HepG2 (cell line): ENCODE measurements at regions of chr2 and their contacts with region 1.

Region 1: GRCh38 chr2:159712143-159712928 is at the start of gene MARCHF7:
- DNase-seq: peak; percentile 95
- ATAC-seq: peak; percentile 97
- H3K4me3 ChIP-seq: peak within 1 kb of the TSS; percentile 87 to 99 (median 99)
- H3K27ac ChIP-seq: peak within 1 kb of the TSS; percentile 94
- H3K4me1 ChIP-seq: peaks cover 37% of the 10 kb centered on the region
- H3K27me3 ChIP-seq: no peaks in the 10 kb centered on the region; a peak in 1 of 5 replicates
- CTCF ChIP-seq: peak; percentile 98
- EP300 ChIP-seq: peak; percentile 26 to 64; a peak in 2 of 4 replicates
- POLR2A ChIP-seq: peak; percentile 98
- RAD21 ChIP-seq: peak; percentile 99
- total RNA-seq, gene MARCHF7: 88.5 and 156 TPM in 2 replicates

Region 2: GRCh38 chr2:159381574-159381973 is 330.8 kb before region 1 on chr2:
- CTCF ChIA-PET with region 1: no interaction called
- POLR2A ChIA-PET with region 1: no interaction called
- in situ Hi-C with region 1: no loop called
- intact Hi-C with region 1: loop called (anchors 10 kb)
- DNase-seq: peak; percentile 47
- ATAC-seq: peak; percentile 99
- H3K4me3 ChIP-seq: no peak overlapping the region; a peak in 1 of 6 replicates
- H3K27ac ChIP-seq: peak overlapping the region; percentile 53
- H3K4me1 ChIP-seq: peaks cover 29% of the 10 kb centered on the region
- H3K27me3 ChIP-seq: no peaks in the 10 kb centered on the region
- CTCF ChIP-seq: no peak
- EP300 ChIP-seq: no peak
- POLR2A ChIP-seq: no peak
- RAD21 ChIP-seq: no peak

Region 3: DNA sequence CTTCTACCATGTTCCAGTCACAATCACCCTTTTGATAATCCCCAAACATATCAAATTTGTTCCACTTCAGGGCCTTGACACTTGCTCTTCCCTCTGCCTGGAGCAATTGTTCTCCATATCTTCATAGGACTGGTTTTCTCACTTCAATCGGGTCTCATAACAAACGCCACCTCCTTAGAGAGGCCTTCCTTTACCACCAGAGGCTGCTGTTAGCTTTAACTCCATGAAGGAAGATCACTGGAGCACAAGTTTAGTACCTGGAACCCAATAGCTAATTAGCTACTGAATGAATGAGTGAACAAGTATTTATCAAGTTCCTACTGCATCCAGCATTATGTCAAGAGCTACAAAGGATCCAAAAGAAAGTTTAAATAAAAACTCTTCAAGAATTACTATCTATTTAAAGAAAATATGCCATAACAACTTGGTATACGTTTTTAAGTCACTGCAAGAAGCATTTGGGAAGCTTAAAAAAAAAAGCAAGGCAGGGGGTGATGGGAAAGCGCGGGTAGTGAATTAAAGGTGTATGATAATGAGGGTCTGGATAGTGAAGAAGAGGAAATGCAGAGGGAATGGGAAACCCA is 154.8 kb before region 1 on chr2:
- CTCF ChIA-PET with region 1: interaction called, 3 read pairs
- POLR2A ChIA-PET with region 1: interaction called, 3 read pairs
- in situ Hi-C with region 1: no loop called
- intact Hi-C with region 1: loop called (anchors 1 kb)
- DNase-seq: peak; percentile 42
- ATAC-seq: peak; percentile 88
- H3K4me3 ChIP-seq: no peak overlapping the region
- H3K27ac ChIP-seq: no peak overlapping the region
- H3K4me1 ChIP-seq: no peaks in the 10 kb centered on the region
- H3K27me3 ChIP-seq: no peaks in the 10 kb centered on the region
- CTCF ChIP-seq: peak; percentile 66
- EP300 ChIP-seq: no peak
- POLR2A ChIP-seq: no peak
- RAD21 ChIP-seq: peak; percentile 57

Region 4: DNA sequence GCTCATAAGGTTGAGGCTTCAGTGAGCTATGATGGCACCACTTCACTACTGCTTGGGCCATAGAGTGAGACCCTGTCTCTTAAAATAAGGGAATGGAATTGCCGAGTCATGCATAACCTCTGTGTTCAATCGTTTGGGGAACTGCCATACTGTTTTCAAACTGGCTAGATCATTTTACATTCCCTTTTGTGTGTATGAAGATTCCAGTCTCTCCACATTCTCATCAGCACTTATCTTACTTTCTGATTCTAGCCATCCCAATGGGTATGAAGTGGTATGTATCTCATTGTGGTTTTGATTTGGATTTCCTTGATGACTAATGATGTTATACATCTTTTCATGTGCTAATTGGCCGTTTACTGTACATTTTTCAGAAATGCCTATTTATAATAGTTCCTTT is 23.7 kb after region 1 on chr2:
- CTCF ChIA-PET with region 1: no interaction called
- POLR2A ChIA-PET with region 1: interaction called, 14 read pairs
- in situ Hi-C with region 1: no loop called
- intact Hi-C with region 1: no loop called
- DNase-seq: no peak
- ATAC-seq: no peak
- H3K4me3 ChIP-seq: no peak overlapping the region
- H3K27ac ChIP-seq: no peak overlapping the region
- H3K4me1 ChIP-seq: no peaks in the 10 kb centered on the region
- H3K27me3 ChIP-seq: no peaks in the 10 kb centered on the region
- CTCF ChIP-seq: no peak
- EP300 ChIP-seq: no peak
- POLR2A ChIP-seq: no peak
- RAD21 ChIP-seq: no peak

Region 5: DNA sequence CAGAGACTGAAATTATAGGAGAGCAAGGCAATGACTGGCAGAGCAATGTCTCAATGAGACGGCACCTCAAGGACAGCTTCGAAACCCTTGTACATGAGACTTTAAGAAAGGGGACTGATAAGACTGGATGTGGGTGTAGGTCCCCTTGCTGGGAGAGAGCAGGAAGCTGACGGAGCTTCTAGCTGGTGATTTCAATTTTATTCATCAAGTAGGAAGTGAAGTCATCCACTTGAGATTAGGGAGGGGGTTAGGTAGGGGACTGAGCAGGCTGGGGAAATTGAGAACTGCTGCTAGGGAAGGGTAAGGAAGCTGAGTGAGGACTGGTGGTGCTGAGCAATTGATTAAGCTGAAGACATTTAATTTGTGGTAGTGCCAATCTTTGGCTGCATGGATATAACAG is 587.2 kb after region 1 on chr2:
- CTCF ChIA-PET with region 1: no interaction called
- POLR2A ChIA-PET with region 1: no interaction called
- in situ Hi-C with region 1: no loop called
- intact Hi-C with region 1: no loop called
- DNase-seq: no peak
- ATAC-seq: no peak
- H3K4me3 ChIP-seq: no peak overlapping the region
- H3K27ac ChIP-seq: no peak overlapping the region
- H3K4me1 ChIP-seq: no peaks in the 10 kb centered on the region
- H3K27me3 ChIP-seq: no peaks in the 10 kb centered on the region
- CTCF ChIP-seq: no peak
- EP300 ChIP-seq: no peak
- POLR2A ChIP-seq: no peak
- RAD21 ChIP-seq: no peak